CD4-positive, alpha-beta memory T cell (primary cell): ENCODE measurements at regions of chr13 and their contacts with region 1.

Region 1: DNA sequence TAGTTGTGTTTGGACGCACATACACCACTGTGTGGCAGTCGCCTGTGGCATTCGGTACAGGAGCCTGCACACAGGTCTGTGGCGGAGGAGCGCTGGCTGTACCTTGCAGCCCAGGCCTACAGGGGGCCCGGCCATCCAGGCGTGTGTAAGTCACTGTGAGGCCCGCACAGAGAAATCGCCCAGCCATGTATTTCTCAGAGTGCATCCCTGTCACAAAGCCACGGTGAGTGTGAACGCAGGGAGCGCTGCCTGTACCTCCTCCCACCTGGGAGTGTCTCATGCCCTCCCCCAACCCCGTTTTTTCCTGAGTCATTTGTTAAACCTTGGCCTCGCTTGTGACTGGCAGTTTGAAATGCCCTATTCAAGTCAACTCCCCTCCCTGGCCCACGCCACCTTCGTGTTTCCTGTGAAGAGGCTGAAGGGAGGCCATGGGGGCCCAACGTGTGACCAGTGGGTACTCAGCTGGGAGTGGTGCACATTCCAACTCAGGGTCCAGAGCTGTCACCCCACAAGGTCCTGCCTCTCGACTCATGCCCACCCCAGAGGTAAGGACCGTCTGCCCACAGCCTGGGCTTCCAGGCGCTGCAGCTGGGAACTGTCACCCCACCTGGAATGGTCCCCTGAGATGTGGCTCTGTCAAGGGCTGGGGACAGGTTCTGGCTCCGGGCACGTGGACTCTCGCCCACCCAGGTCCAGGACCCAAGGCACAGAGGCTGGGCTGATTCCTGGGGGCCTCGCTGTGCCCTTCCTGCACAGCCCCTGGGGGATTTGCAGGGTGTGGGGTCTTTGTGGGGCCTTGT is 11.6 kb upstream of the RASA3 start:
- DNase-seq: peak in 3 of 5 donors; percentile 42 to 52 (median 51)
- H3K4me3 ChIP-seq: peak overlapping the region in 1 of 2 donors; percentile 43
- H3K4me3 Mint-ChIP-seq: peak overlapping the region in 2 of 8 donors; percentile 32 to 78
- H3K27ac ChIP-seq: peak overlapping the region; percentile 56
- H3K27ac Mint-ChIP-seq: peak overlapping the region in 5 of 7 donors; percentile 91 to 96 (median 94)
- H3K4me1 ChIP-seq: peaks cover 90% of the 10 kb centered on the region
- H3K4me1 Mint-ChIP-seq: peaks cover 38 to 48% (median 41%) of the 10 kb centered on the region in 4 donors
- H3K27me3 ChIP-seq: no peaks in the 10 kb centered on the region
- H3K27me3 Mint-ChIP-seq: no peaks in the 10 kb centered on the region

Region 2: GRCh38 chr13:113758651-113759524 is 385.1 kb before region 1 on chr13 and contains the start of gene TMEM255B:
- CTCF ChIA-PET with region 1: no interaction called
- POLR2A ChIA-PET with region 1: no interaction called
- intact Hi-C with region 1: no loop called
- DNase-seq: peak; percentile 58 to 72 (median 59)
- H3K4me3 ChIP-seq: peak within 1 kb of the TSS; percentile 22 to 59
- H3K4me3 Mint-ChIP-seq: peak within 1 kb of the TSS; percentile 81 to 96 (median 90)
- H3K27ac ChIP-seq: no peak within 1 kb of the TSS
- H3K27ac Mint-ChIP-seq: peak within 1 kb of the TSS in 4 of 7 donors; percentile 3 to 80 (median 68)
- H3K4me1 ChIP-seq: peaks cover 14% of the 10 kb centered on the region
- H3K4me1 Mint-ChIP-seq: peaks cover 7 to 15% (median 12%) of the 10 kb centered on the region in 4 donors
- H3K27me3 ChIP-seq: peaks cover 37% of the 10 kb centered on the region
- H3K27me3 Mint-ChIP-seq: peaks cover 25 to 41% of the 10 kb centered on the region in 2 donors
- total RNA-seq, gene TMEM255B: 0.90 to 1.00 TPM

Region 3: GRCh38 chr13:114124921-114125320 is 19.1 kb before region 1 on chr13:
- CTCF ChIA-PET with region 1: interaction called, 11 read pairs
- POLR2A ChIA-PET with region 1: interaction called, 170 read pairs
- intact Hi-C with region 1: loop called (anchors 1 kb)
- DNase-seq: peak; percentile 72 to 87 (median 78)
- H3K4me3 ChIP-seq: peak overlapping the region in 1 of 2 donors; percentile 15
- H3K4me3 Mint-ChIP-seq: peak overlapping the region; percentile 58 to 88 (median 74)
- H3K27ac ChIP-seq: peak overlapping the region; percentile 22
- H3K27ac Mint-ChIP-seq: peak overlapping the region; percentile 85 to 98 (median 93)
- H3K4me1 ChIP-seq: peaks cover 95% of the 10 kb centered on the region
- H3K4me1 Mint-ChIP-seq: peaks cover 52 to 95% (median 77%) of the 10 kb centered on the region in 4 donors
- H3K27me3 ChIP-seq: no peaks in the 10 kb centered on the region
- H3K27me3 Mint-ChIP-seq: no peaks in the 10 kb centered on the region

Region 4: DNA sequence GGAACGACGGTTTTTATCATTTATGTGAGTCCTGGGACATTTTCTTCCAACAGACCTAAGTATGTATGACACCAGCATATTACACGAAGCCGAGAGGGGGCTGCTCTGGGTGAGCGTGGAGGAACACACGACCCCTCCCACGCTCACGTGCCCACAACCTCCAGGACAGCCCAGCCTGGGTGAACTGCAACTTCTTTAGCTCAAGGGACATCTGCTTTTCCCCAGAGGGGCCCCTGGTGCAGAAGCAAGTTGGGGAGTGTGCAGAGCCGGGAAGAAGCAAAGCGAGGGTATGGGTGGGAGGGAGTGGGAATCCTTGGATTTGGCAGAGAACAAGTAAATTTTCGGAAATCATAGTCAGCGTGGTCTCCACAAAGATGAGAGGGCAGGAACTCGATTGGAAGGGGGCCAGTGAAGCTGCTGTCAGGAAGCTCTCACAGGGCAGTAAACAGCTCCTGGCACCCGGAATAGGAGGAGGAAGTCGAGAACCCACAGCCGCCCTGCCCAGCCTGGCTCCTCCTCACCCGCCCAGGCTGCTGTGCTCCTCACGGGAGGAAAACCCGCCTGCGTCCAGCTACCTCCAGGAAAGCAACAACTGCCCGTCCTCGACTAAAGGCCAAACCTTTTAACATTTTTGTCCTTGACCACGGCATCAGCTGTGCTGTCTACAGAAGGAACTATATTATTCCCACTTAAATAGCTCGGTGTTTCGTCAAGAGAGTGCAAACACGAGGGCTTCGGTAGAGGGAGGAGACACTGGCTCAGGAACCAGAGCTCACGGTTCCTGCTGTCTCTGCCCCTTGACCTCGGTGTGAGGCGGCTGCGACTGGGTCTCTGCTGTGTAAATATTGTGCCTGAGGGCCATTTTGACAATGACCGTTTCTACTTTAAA is 17.9 kb after region 1 on chr13:
- CTCF ChIA-PET with region 1: interaction called, 6 read pairs
- POLR2A ChIA-PET with region 1: interaction called, 54 read pairs
- intact Hi-C with region 1: loop called (anchors 1 kb)
- DNase-seq: peak in 3 of 5 donors; percentile 32 to 51 (median 39)
- H3K4me3 ChIP-seq: peak overlapping the region in 1 of 2 donors; percentile 13
- H3K4me3 Mint-ChIP-seq: peak overlapping the region; percentile 50 to 92 (median 86)
- H3K27ac ChIP-seq: peak overlapping the region; percentile 23
- H3K27ac Mint-ChIP-seq: peak overlapping the region; percentile 81 to 97 (median 93)
- H3K4me1 ChIP-seq: peaks cover 81% of the 10 kb centered on the region
- H3K4me1 Mint-ChIP-seq: peaks cover 52 to 95% (median 72%) of the 10 kb centered on the region in 4 donors
- H3K27me3 ChIP-seq: no peaks in the 10 kb centered on the region
- H3K27me3 Mint-ChIP-seq: no peaks in the 10 kb centered on the region

Region 5: GRCh38 chr13:114212158-114212495 is 68.1 kb after region 1 on chr13:
- CTCF ChIA-PET with region 1: interaction called, 3 read pairs
- POLR2A ChIA-PET with region 1: interaction called, 10 read pairs
- intact Hi-C with region 1: no loop called
- DNase-seq: no peak
- H3K4me3 ChIP-seq: no peak overlapping the region
- H3K4me3 Mint-ChIP-seq: no peak overlapping the region
- H3K27ac ChIP-seq: no peak overlapping the region
- H3K27ac Mint-ChIP-seq: peak overlapping the region in 3 of 7 donors; percentile 43 to 79 (median 71)
- H3K4me1 ChIP-seq: peaks cover 5% of the 10 kb centered on the region
- H3K4me1 Mint-ChIP-seq: peaks cover 3 to 26% (median 10%) of the 10 kb centered on the region in 4 donors
- H3K27me3 ChIP-seq: peaks cover 4% of the 10 kb centered on the region
- H3K27me3 Mint-ChIP-seq: peaks cover 4 to 5% of the 10 kb centered on the region in 2 donors

Region 6: DNA sequence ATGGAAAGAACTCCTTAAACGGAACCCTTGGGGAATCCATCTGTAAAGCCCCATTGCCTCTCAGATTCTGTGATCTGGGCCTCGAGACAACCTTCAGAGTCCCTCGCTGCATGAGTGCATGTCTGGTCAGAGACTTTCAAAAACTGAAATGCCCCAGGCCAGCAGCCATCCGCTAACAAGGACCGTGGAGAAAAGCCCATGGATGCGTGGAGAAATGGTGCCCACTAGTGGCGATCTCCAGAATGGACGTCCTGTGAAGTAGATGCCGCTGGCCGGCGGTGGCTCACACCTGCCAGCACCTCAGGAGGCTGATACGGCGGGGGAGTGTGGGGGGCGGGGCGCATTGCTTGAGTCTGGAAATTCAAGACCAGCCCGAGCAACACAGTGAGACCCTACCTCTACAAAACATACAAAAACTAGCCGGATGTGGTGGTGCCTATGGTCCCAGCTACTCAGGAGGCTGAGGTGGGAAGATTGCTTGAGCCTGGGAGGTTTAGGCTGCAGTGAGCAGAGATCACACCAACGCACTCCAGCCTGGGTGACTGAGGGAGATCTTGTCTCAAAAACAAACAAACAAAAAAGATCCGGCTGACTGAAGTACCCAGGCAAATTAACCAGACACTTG is 82.8 kb after region 1 on chr13:
- CTCF ChIA-PET with region 1: interaction called, 7 read pairs
- POLR2A ChIA-PET with region 1: interaction called, 15 read pairs
- intact Hi-C with region 1: loop called (anchors 1 kb)
- DNase-seq: peak; percentile 75 to 80 (median 78)
- H3K4me3 ChIP-seq: no peak overlapping the region
- H3K4me3 Mint-ChIP-seq: peak overlapping the region; percentile 7 to 74 (median 48)
- H3K27ac ChIP-seq: no peak overlapping the region
- H3K27ac Mint-ChIP-seq: peak overlapping the region; percentile 69 to 89 (median 78)
- H3K4me1 ChIP-seq: peaks cover 34% of the 10 kb centered on the region
- H3K4me1 Mint-ChIP-seq: peaks cover 26 to 45% (median 36%) of the 10 kb centered on the region in 4 donors
- H3K27me3 ChIP-seq: no peaks in the 10 kb centered on the region
- H3K27me3 Mint-ChIP-seq: peaks cover 3% of the 10 kb centered on the region in 2 donors